ENCODE measurements at regions of chr14 and their contacts with region 1.

Region 1: DNA sequence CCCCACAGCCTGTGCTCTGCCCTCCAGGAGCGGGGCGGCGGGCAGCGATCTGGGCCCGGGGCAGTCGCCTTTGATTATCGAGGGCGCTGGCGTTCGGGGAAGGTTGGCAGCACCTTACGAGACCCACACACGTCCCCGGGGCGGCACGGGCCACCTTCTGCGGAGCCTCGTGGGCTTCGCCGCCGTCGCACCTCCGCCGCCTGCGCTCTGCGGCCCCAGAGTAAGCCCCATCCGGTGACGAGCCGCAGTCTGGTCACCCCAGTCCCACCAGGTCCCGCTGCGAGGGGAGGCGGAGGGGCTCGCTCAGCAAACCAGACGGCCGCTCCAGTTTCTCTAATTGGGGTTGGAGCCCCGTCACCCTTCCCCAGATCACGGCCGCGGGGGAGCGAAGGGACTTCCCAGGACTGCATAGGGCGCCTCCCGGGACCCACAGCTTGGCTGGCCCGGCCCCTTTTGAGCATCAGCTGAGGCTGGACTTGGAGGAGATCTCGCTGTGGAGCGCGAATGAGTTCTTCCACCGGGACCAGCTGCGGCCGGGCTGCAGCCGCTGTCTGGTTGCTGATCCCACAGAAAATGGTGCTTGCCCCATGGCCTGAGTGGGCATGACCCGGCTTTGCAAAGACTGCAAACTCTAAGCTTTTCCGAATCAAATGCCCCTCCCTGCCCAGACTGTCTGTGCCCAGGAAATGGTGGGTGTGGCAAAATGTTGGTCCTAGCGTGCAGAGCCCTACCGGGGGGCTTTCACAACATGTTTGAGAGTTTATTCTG is 560 bp downstream of the LGALS3 start:
- DNase-seq: peak; percentile 91
- ATAC-seq: peak; percentile 68

Region 2: DNA sequence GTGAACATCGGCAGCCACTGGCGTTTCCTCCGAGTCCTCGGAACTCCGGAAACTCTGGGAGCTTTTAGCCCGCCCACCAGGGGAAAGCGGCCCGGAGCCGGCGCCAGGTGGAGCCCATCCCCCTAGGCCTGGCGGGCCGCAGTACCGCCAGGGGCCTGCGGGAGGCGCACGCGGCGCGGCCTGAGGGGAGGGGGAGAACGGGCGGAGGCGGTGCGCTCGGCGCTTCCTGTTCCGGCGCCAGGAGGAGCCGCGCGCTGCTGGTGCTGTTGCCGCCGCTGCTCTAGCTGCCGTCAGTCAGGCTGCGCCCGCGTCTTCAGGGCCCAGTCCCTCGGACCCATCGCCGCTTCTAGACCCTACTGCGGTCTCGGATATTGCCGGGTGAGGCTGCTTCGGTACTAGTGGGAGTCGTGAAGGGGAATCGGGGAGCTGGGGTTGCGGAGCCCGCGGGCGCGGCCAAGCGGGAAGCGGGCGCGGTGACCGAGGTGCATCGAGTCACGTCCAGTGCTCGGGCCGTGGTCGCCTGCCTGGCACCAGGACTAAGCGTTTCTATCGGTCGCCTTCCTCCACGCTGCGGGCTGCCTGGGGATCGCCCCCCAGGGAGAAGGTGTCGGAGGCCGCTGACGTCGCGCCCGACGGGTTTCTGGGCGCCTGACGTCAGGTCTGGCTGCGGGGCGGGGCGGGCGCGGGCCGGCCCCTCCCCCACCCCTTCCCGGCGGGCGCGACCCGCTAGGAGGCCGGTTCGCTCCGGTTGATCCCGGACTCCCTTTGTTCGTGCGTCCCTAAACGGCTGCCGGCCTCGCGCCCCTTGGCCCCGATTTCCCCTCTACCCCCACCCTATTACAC is 78.0 kb before region 1 on chr14 and contains the start of gene MAPK1IP1L:
- intact Hi-C with region 1: loop called (anchors 5 kb)
- DNase-seq: peak; percentile 95
- ATAC-seq: peak; percentile 98
- total RNA-seq, gene MAPK1IP1L: 65.0 TPM

Region 3: DNA sequence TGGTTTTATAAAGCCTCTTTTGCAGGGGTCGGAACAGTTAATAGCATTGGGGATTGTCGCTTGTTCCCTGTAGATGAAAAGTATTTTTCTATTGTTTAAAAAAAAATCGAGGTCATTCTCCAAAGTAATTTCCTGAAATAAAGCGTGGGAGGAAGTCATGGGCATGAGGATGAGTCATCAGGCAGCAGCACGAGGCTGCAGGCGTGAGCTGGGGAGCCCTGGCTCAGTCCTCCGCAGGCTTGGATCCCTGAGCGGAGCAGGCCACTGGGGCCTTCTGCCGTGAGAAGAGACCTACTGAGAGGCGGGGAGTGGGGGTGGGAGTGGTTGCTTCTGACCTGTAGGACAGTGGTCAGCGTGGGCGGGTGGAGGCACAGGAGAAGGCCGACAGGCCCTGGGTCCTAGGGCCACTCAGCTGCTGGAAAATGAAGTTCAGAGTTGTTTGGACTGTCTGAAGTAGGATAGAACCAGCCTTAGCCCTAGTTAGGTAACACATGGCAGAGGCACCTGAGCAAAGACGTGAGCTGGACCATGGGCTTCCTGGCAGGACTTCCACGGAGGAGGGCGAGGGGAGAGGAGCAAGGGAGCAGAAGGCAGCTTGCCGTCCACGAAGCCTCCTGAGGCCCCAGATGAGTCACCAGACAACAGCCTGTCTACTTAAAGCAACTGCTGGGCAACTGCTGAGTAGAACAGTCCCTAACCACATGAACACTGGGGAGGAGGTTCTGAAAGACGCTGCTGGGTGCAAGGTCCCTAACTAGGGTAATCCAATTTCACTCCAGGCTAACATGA is 21.7 kb before region 1 on chr14:
- intact Hi-C with region 1: loop called (anchors 2 kb)
- DNase-seq: peak; percentile 91
- ATAC-seq: peak; percentile 92